Mammary epithelial cell (primary cell): ENCODE measurements at regions of chr4 and their contacts with region 1.

Region 1: GRCh38 chr4:40301603-40302002 is 33.5 kb upstream of the CHRNA9 start:
- DNase-seq: no peak
- H3K4me3 ChIP-seq: no peak overlapping the region
- H3K27ac ChIP-seq: no peak overlapping the region
- H3K4me1 ChIP-seq: peaks cover 8% of the 10 kb centered on the region
- H3K27me3 ChIP-seq: no peaks in the 10 kb centered on the region
- CTCF ChIP-seq: no peak

Region 2: GRCh38 chr4:40140196-40140595 is 161.4 kb before region 1 on chr4:
- CTCF ChIA-PET with region 1: no interaction called
- dilution Hi-C with region 1: loop called (anchors 5 kb)
- in situ Hi-C with region 1: no loop called
- intact Hi-C with region 1: no loop called
- DNase-seq: no peak
- H3K4me3 ChIP-seq: no peak overlapping the region
- H3K27ac ChIP-seq: no peak overlapping the region
- H3K4me1 ChIP-seq: no peaks in the 10 kb centered on the region
- H3K27me3 ChIP-seq: no peaks in the 10 kb centered on the region
- CTCF ChIP-seq: no peak

Region 3: GRCh38 chr4:40180356-40180755 is 121.2 kb before region 1 on chr4:
- CTCF ChIA-PET with region 1: no interaction called
- dilution Hi-C with region 1: loop called (anchors 5 kb)
- in situ Hi-C with region 1: no loop called
- intact Hi-C with region 1: no loop called
- DNase-seq: peak; percentile 93
- H3K4me3 ChIP-seq: no peak overlapping the region
- H3K27ac ChIP-seq: peak overlapping the region; percentile 99
- H3K4me1 ChIP-seq: peaks cover 33% of the 10 kb centered on the region
- H3K27me3 ChIP-seq: no peaks in the 10 kb centered on the region
- CTCF ChIP-seq: no peak

Region 4: DNA sequence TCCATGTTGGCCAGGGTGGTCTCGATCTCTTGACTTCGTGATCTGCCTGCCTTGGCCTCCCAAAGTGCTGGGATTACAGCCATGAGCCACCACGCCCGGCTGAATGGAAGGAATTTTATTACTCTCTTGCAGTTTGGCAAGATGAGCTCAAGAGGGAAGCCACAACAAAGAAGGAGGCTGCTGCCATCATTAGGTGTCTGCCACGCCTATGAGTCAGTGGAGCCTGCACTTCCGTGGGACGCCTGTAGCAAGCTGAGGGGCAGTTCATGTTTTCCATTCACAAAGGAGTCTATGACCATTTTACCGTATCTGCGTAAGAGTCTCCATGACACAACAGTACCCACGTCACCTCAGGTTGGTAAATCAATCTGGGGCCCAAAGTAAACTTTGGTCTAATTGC is 17.6 kb before region 1 on chr4:
- CTCF ChIA-PET with region 1: no interaction called
- dilution Hi-C with region 1: no loop called
- in situ Hi-C with region 1: no loop called
- intact Hi-C with region 1: no loop called
- DNase-seq: peak; percentile 41
- H3K4me3 ChIP-seq: no peak overlapping the region
- H3K27ac ChIP-seq: no peak overlapping the region
- H3K4me1 ChIP-seq: peaks cover 3% of the 10 kb centered on the region
- H3K27me3 ChIP-seq: no peaks in the 10 kb centered on the region
- CTCF ChIP-seq: peak in 1 of 2 donors; percentile 30

Region 5: DNA sequence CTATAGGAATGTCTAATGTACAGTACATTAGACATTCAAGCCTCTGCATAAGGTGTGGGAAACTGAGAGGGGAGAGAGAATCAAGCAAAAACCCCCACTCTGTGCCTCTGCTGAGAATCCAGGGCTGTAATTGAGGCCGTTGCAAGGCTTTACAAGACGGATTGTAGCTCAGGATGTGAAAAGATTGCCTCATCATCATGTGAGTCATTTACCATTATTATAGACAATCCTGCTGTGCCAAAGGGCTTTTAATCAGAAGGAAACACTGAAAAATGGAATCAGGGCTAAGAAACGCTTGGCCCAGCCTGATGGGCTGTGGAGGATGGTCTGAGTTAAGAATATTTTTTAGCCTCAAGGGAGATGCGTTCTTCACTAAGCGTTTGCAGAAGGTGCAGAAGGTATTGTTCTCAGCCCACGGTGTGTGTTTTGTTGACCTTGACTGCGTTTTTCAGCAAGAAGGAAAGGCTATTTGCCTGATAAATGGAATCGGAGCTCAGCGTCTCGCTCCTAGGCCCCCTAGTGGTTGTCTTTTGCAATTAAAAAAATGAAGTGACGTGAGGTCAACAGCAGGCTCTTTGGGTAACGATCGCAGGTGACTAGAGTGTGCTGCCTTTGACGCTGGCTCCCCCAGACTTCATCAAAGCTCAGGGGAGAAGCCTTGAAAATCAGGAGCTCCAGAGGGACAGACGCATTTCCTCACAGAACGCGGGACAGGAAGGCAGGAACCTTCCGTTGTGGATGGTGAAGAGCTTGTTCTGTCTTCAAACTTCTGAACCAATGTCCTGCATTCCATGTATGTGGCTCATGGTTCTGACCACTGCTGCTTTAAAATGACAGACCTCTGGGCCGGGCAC is 15.4 kb after region 1 on chr4:
- CTCF ChIA-PET with region 1: no interaction called
- dilution Hi-C with region 1: no loop called
- in situ Hi-C with region 1: no loop called
- intact Hi-C with region 1: no loop called
- DNase-seq: peak; percentile 88
- H3K4me3 ChIP-seq: peak overlapping the region; percentile 22 to 40 (median 26)
- H3K27ac ChIP-seq: peak overlapping the region; percentile 99
- H3K4me1 ChIP-seq: peaks cover 39% of the 10 kb centered on the region
- H3K27me3 ChIP-seq: no peaks in the 10 kb centered on the region
- CTCF ChIP-seq: peak; percentile 74 to 79